ENCODE measurements at regions of chr6 and their contacts with region 1.

Region 1: DNA sequence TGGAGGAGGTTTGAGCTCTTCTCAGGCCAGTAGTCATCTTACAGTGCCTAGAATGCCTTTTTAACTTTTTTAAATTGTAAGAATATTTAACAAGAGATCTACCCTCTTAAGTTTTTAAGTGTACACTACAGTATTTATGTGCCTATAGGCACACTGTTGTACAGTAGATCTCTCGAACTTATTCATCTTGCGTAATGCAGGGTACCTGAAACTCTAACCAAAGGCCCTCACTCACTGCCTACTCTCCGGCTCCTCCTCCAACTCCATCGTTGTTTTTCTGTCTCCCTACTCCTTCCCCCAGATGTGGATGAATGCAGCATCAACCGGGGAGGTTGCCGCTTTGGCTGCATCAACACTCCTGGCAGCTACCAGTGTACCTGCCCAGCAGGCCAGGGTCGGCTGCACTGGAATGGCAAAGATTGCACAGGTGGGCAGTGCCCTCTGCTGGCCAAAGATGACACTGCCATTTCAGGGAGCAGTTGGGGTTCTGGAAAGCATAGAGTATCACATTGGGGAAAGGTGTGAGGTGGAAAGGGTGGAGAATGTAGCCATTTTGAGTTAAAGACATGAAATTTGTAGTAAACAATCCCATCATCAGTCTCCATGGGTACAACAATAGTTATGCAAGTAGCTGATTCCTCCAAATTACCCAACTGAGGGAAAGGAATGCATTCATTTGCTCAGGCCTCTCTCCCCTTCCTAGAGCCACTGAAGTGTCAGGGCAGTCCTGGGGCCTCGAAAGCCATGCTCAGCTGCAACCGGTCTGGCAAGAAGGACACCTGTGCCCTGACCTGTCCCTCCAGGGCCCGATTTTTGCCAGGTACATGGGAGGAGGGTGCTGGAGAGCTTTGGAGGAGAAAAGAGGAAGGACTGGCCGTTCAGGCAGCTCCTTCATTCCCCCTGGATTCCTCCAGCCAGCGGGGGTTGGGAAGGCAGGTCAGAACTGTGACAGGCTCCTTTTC is 18.4 kb upstream of the ZNF76 start:
- DNase-seq: peak; percentile 86
- ATAC-seq: peak; percentile 96
- H3K4me3 Mint-ChIP-seq: no peak overlapping the region
- H3K27ac Mint-ChIP-seq: no peak overlapping the region
- H3K4me1 Mint-ChIP-seq: no peaks in the 10 kb centered on the region
- H3K27me3 Mint-ChIP-seq: no peaks in the 10 kb centered on the region

Region 2: GRCh38 chr6:35146453-35146852 is 94.7 kb before region 1 on chr6:
- CTCF ChIA-PET with region 1: interaction called, 19 read pairs
- POLR2A ChIA-PET with region 1: no interaction called
- intact Hi-C with region 1: loop called (anchors 1 to 2 kb)
- DNase-seq: peak; percentile 70
- ATAC-seq: no peak
- H3K4me3 Mint-ChIP-seq: no peak overlapping the region
- H3K27ac Mint-ChIP-seq: no peak overlapping the region
- H3K4me1 Mint-ChIP-seq: peaks cover 24% of the 10 kb centered on the region
- H3K27me3 Mint-ChIP-seq: peaks cover 14% of the 10 kb centered on the region

Region 3: DNA sequence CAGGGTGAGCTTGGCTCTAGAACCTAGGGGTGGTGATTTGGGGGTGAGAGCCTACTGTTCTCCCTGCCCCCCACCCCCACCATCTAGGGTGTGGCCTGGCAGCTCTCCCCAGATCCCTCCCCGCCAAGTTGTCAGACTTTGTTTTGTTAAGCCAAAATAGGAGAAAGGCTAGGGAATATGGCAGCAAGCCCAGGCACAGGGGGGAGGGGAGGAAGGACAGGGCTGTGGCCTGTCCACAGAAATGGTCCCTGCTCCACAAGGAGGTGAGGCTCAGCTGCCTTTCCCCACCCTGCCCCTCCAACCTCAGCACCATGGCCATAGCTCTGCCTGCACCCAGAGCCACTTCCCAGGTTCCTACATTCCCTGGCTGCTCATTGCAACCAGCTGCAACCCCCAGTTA is 10.2 kb before region 1 on chr6:
- CTCF ChIA-PET with region 1: interaction called, 39 read pairs
- POLR2A ChIA-PET with region 1: no interaction called
- intact Hi-C with region 1: no loop called
- DNase-seq: no peak
- ATAC-seq: no peak
- H3K4me3 Mint-ChIP-seq: no peak overlapping the region
- H3K27ac Mint-ChIP-seq: no peak overlapping the region
- H3K4me1 Mint-ChIP-seq: no peaks in the 10 kb centered on the region
- H3K27me3 Mint-ChIP-seq: no peaks in the 10 kb centered on the region

Region 4: DNA sequence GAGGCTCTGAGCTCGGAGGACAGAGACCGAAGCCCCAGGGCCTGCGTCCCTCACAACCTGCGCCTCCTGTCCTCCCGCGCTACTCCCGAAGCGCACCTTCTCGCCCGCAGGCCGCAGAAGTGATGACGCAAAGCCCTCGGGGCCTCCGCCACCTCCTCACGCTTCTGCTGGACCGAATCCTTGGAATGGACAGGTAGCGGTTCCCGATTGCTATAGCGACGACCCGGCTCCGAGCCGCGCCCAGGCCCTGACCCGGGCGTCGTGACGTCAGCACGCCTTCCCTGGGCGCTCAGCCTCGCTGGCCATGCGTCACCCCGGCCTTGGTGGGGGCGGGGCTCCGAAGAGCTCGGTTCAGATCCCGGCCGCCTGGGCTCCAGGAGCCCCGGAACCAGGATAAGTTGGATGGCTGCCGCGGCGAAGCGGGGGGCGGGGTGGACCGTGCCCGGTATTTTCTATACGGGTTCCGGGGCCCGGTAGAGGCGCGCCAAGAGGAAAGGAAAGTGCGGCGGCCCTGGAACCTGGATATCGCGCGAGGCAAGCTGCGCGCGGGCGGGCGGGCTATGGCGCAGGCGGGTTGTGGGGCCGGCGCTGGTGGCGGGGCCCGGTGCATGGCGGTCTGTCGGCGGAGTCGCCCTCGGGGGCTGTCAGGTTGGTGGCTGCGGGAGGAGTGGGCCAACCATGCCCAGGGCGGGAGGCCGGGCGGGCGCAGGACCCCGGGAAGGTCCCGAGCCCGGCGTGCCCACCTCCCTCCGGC is 18.2 kb after region 1 on chr6 and contains the start of gene ZNF76:
- CTCF ChIA-PET with region 1: interaction called, 28 read pairs
- POLR2A ChIA-PET with region 1: no interaction called
- intact Hi-C with region 1: no loop called
- DNase-seq: peak; percentile 95
- ATAC-seq: peak; percentile 89
- H3K4me3 Mint-ChIP-seq: peak within 1 kb of the TSS; percentile 91
- H3K27ac Mint-ChIP-seq: peak within 1 kb of the TSS; percentile 90
- H3K4me1 Mint-ChIP-seq: peaks cover 45% of the 10 kb centered on the region
- H3K27me3 Mint-ChIP-seq: no peaks in the 10 kb centered on the region
- total RNA-seq, gene ZNF76: 35.2 to 40.1 TPM